ENCODE measurements at regions of chr11 and their contacts with region 1.

Region 1: GRCh38 chr11:118240999-118241768 is 11.0 kb downstream of the MPZL3 start:
- DNase-seq: peak; percentile 93
- H3K4me3 ChIP-seq: peak overlapping the region in 1 of 3 experiments; percentile 4
- H3K27ac ChIP-seq: peak overlapping the region; percentile 64
- H3K4me1 ChIP-seq: peaks cover 45% of the 10 kb centered on the region
- H3K27me3 ChIP-seq: no peaks in the 10 kb centered on the region
- CTCF ChIP-seq: no peak
- POLR2A ChIP-seq: peak; percentile 78

Region 2: GRCh38 chr11:117898059-117898458 is 343.1 kb before region 1 on chr11:
- CTCF ChIA-PET with region 1: no interaction called
- POLR2A ChIA-PET with region 1: no interaction called
- dilution Hi-C with region 1: no loop called
- intact Hi-C with region 1: no loop called
- DNase-seq: no peak
- H3K4me3 ChIP-seq: no peak overlapping the region
- H3K27ac ChIP-seq: no peak overlapping the region
- H3K4me1 ChIP-seq: no peaks in the 10 kb centered on the region
- H3K27me3 ChIP-seq: peaks cover 12% of the 10 kb centered on the region in 2 experiments
- CTCF ChIP-seq: no peak
- POLR2A ChIP-seq: no peak

Region 3: GRCh38 chr11:118164885-118165284 is 76.3 kb before region 1 on chr11:
- CTCF ChIA-PET with region 1: no interaction called
- POLR2A ChIA-PET with region 1: no interaction called
- dilution Hi-C with region 1: no loop called
- intact Hi-C with region 1: no loop called
- DNase-seq: no peak
- H3K4me3 ChIP-seq: no peak overlapping the region
- H3K27ac ChIP-seq: no peak overlapping the region
- H3K4me1 ChIP-seq: no peaks in the 10 kb centered on the region
- H3K27me3 ChIP-seq: peaks cover 2 to 21% of the 10 kb centered on the region in 2 experiments
- CTCF ChIP-seq: no peak
- POLR2A ChIP-seq: no peak

Region 4: DNA sequence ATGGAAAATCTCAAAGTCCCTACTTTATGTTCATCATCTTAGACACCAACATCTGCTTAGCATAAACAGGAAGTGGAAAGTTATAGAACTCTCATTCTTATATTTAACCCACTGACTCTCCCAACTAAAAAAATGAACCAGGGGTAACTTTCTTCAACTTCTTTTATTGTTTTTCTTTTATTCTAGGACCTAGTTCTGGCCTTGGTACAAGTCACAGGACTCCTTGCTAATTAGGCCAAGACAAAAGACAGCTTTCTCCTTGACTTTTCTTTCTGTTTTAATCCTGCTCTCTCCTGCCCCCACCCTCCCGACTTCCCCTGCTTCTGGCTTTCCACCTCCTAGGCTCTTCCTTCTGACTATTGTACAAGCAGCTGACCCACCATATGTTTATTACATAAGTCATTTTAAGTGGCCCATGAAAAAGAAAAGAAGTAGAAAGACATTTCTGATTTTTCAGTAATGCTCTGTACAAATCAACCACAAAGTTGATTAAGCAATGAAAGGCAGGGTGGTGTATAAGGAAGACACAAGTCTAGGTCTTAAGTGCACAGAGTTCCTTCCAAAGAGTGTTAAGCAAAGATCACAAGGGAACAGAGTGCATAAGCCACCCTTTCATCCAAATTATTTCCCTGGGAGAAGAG is 34.7 kb before region 1 on chr11:
- CTCF ChIA-PET with region 1: no interaction called
- POLR2A ChIA-PET with region 1: no interaction called
- dilution Hi-C with region 1: no loop called
- intact Hi-C with region 1: loop called (anchors 1 kb)
- DNase-seq: peak; percentile 85
- H3K4me3 ChIP-seq: no peak overlapping the region
- H3K27ac ChIP-seq: peak overlapping the region; percentile 19
- H3K4me1 ChIP-seq: peaks cover 15% of the 10 kb centered on the region
- H3K27me3 ChIP-seq: peaks cover 2 to 7% of the 10 kb centered on the region in 2 experiments
- CTCF ChIP-seq: no peak
- POLR2A ChIP-seq: no peak

Region 5: GRCh38 chr11:118277306-118277705 is 36.1 kb after region 1 on chr11:
- CTCF ChIA-PET with region 1: interaction called, 3 read pairs
- POLR2A ChIA-PET with region 1: no interaction called
- dilution Hi-C with region 1: no loop called
- intact Hi-C with region 1: loop called (anchors 1 kb)
- DNase-seq: peak; percentile 83
- H3K4me3 ChIP-seq: no peak overlapping the region
- H3K27ac ChIP-seq: peak overlapping the region; percentile 72
- H3K4me1 ChIP-seq: peaks cover 42% of the 10 kb centered on the region
- H3K27me3 ChIP-seq: no peaks in the 10 kb centered on the region
- CTCF ChIP-seq: no peak
- POLR2A ChIP-seq: no peak

Region 6: DNA sequence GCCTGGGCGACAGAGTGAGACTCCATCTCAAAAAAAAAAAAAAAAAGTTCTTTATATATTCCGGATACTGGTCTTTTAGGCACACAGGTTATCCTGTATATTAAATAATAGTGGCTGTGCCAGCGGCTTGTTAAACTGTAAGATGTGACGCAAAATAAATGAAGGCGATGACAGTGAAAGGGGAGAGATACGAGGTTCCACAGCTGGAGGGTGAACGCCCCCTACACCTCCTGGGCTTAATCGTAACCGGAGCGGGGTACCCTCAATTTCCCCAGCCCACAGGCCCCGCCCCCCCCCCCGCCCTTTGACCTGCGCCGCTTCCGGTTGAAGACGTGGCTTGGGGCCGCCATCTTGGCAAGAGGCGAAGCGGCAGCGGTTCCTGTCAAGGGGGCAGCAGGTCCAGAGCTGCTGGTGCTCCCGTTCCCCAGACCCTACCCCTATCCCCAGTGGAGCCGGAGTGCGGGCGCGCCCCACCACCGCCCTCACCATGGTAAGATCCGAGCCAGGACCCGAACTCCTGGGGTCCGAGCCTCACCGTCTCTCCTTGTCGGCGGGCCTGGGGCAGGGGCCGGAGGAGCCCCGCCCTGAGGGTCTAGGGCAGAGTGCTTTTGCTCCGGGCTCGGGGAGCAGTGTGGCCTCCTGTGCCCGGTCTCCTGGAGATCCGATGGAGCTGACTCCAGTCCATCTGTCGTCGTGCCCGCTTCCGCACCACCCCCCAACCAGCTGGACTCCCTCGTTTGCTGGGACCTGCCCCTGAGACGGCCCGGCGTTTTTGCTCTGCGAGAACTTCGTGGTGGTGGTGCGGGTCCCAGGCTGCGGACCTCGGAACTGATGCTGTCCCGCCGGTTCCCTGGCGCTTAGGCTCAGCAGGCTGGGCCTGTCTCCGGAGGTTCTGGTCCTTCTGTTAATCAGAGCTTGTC is 331.1 kb after region 1 on chr11 and contains the start of gene ARCN1:
- CTCF ChIA-PET with region 1: no interaction called
- POLR2A ChIA-PET with region 1: no interaction called
- dilution Hi-C with region 1: no loop called
- intact Hi-C with region 1: no loop called
- DNase-seq: peak; percentile 74
- H3K4me3 ChIP-seq: peak within 1 kb of the TSS; percentile 59 to 99 (median 90)
- H3K27ac ChIP-seq: peak within 1 kb of the TSS; percentile 87
- H3K4me1 ChIP-seq: peaks cover 19% of the 10 kb centered on the region
- H3K27me3 ChIP-seq: no peaks in the 10 kb centered on the region
- CTCF ChIP-seq: no peak
- POLR2A ChIP-seq: peak; percentile 92
- total RNA-seq, gene ARCN1: 168 and 172 TPM in 2 replicates